GM12878 (cell line): ENCODE measurements at regions of chr14 and their contacts with region 1.

Region 1: DNA sequence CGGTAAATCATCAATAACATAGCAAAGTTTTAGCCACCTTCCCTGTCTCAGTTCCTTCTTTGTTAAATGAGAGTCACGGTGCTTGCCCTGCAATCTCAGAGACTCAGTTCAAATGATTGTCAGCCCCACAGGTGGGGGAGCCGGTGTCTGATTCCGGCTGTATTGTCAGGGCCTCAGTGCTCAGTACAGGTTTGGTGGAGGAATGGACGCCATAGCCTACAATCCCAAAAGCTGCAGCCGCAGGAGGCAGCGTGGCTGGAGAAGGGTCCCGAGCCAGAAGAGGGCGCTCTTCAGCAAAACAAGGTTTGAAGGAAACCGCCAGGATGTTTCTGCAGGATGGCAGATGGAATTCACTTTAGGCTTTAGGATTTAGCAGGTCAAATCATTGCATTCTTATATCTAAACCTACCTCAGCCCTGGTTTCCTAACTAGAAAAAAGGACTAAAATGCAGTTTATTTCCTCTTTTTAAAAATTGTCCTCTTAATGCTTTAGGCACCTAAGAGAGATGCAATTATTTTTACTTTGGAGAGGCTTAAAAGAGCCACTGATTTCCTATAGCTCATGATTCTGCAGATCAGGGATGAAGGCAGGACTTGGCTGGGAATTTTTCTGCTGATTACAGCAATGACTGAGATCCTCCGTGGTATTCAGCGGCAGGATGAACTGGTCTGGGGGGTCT is 29.2 kb downstream of the FOS start:
- DNase-seq: no peak
- ATAC-seq: peak; percentile 87
- H3K4me3 ChIP-seq: no peak overlapping the region
- H3K27ac ChIP-seq: no peak overlapping the region
- H3K4me1 ChIP-seq: peaks cover 8% of the 10 kb centered on the region
- H3K27me3 ChIP-seq: no peaks in the 10 kb centered on the region
- CTCF ChIP-seq: peak; percentile 87 to 97 (median 88); a peak in 5 of 6 replicates
- EP300 ChIP-seq: no peak
- POLR2A ChIP-seq: no peak
- RAD21 ChIP-seq: peak; percentile 90

Region 2: GRCh38 chr14:74945823-74946682 is 361.8 kb before region 1 on chr14:
- CTCF ChIA-PET with region 1: interaction called, 6 read pairs
- POLR2A ChIA-PET with region 1: no interaction called
- RAD21 ChIA-PET with region 1: no interaction called
- SMC1A ChIA-PET with region 1: interaction called, 4 read pairs
- in situ Hi-C with region 1: no loop called
- intact Hi-C with region 1: loop called (anchors 10 kb)
- DNase-seq: no peak
- ATAC-seq: peak; percentile 84
- H3K4me3 ChIP-seq: no peak overlapping the region
- H3K27ac ChIP-seq: no peak overlapping the region
- H3K4me1 ChIP-seq: peaks cover 23% of the 10 kb centered on the region
- H3K27me3 ChIP-seq: no peaks in the 10 kb centered on the region
- CTCF ChIP-seq: peak; percentile 90 to 96 (median 94)
- EP300 ChIP-seq: no peak
- POLR2A ChIP-seq: no peak
- RAD21 ChIP-seq: peak; percentile 87

Region 3: DNA sequence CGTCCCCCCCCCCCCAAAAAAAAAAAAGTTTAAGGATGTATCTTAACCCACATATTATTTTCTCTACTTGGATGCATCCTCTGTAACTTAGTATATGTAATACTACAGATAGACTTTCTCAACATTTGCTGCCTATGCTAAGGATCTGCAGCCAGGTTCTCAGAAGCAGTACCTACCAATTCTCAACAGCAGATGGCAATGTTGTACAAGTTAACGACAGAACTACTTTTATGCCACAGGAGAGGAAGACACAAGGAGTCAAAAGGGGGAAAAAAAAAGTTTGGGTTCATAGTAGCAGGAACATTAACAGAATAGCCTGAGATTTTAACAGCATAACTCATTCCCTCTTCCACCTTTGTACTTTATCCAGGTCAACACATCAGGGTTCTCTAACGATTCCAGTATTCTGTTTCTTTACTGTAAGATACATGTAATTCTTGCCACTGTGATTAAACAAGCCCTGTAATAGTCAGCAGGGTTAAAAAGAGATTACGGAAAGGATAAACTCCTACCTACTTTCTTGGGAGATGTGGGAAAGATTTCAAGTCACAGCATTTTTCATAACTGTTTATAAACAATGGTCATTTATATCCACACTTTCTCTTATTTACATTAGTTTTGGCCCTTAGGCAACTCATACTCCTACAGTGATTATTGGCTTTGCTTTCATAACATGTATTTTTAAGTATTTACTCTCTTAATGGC is 175.3 kb before region 1 on chr14:
- CTCF ChIA-PET with region 1: interaction called, 279 read pairs
- POLR2A ChIA-PET with region 1: interaction called, 3 read pairs
- RAD21 ChIA-PET with region 1: interaction called, 37 read pairs
- SMC1A ChIA-PET with region 1: interaction called, 154 read pairs
- in situ Hi-C with region 1: loop called (anchors 5 kb)
- intact Hi-C with region 1: loop called (anchors 1 kb)
- DNase-seq: peak; percentile 66
- ATAC-seq: peak; percentile 91
- H3K4me3 ChIP-seq: no peak overlapping the region
- H3K27ac ChIP-seq: no peak overlapping the region
- H3K4me1 ChIP-seq: peaks cover 11% of the 10 kb centered on the region
- H3K27me3 ChIP-seq: no peaks in the 10 kb centered on the region
- CTCF ChIP-seq: peak; percentile 67 to 70 (median 68)
- EP300 ChIP-seq: no peak
- POLR2A ChIP-seq: no peak
- RAD21 ChIP-seq: peak; percentile 94

Region 4: DNA sequence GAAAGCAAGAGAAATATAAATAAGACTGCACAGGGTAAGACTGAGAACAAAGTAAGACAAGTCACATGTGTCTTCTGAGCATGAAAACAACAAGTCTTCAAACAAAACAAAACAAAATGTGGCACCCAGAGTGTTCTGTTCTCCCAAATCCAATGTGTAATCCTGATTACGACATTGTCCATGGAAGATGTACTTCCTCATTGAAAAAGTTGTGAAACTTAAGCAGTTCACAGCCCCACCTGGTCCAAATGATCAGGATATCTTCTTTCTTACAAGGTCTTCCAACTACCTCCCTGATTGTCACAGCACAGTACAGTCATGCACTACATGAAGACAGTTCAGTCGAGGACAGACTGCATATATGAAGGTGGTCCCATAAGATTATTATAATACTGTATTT is 157.7 kb before region 1 on chr14:
- CTCF ChIA-PET with region 1: no interaction called
- POLR2A ChIA-PET with region 1: no interaction called
- RAD21 ChIA-PET with region 1: no interaction called
- SMC1A ChIA-PET with region 1: no interaction called
- in situ Hi-C with region 1: no loop called
- intact Hi-C with region 1: no loop called
- DNase-seq: no peak
- ATAC-seq: no peak
- H3K4me3 ChIP-seq: no peak overlapping the region
- H3K27ac ChIP-seq: no peak overlapping the region
- H3K4me1 ChIP-seq: no peaks in the 10 kb centered on the region
- H3K27me3 ChIP-seq: no peaks in the 10 kb centered on the region
- CTCF ChIP-seq: no peak
- EP300 ChIP-seq: no peak
- POLR2A ChIP-seq: no peak
- RAD21 ChIP-seq: no peak

Region 5: GRCh38 chr14:75198291-75198933 is 109.4 kb before region 1 on chr14:
- CTCF ChIA-PET with region 1: no interaction called
- POLR2A ChIA-PET with region 1: no interaction called
- RAD21 ChIA-PET with region 1: no interaction called
- SMC1A ChIA-PET with region 1: no interaction called
- in situ Hi-C with region 1: no loop called
- intact Hi-C with region 1: no loop called
- DNase-seq: no peak
- ATAC-seq: no peak
- H3K4me3 ChIP-seq: no peak overlapping the region
- H3K27ac ChIP-seq: no peak overlapping the region
- H3K4me1 ChIP-seq: no peaks in the 10 kb centered on the region
- H3K27me3 ChIP-seq: 0 out of 4 replicates have a peak, but pooled peaks cover 0 to 2% of the 10 kb centered on the region in 2 experiments
- CTCF ChIP-seq: no peak
- EP300 ChIP-seq: no peak
- POLR2A ChIP-seq: no peak
- RAD21 ChIP-seq: no peak

Region 6: DNA sequence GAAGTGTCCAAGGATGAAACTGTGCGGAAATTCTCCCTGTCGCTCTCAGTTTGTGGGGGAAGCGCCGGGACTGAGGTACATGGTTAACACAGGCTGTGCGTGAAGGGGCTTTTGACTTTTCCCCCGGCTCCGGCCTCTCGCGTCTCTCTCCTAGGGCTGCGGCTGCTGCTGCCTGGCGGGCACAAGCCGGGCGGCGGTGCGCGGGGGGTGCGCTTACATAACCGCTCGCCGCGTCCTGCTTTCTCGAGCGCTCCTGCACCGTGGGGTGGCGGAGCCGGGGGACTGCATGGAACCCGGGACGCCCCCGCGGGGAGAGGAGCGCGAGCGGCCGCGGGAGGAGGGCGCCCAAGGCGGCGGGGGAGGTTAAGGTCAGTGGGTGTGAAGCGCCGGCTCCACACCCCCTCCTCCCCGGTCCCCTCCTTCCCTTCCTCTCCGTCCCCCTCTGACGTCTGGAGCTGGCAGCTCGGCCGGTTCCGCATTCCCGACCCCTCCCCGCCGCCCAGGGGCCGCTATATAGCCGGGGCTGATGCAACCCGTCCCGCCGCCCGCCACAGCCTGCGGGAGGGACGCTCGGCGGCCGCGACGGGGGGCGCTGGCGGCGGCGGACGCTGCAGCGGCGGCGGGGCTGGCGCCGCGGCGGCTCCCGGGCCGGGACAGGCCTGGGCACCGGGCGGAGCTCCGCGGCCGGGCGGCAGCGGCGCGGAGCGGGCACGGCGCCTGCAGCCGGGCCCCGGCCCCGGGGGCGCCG is 119.8 kb after region 1 on chr14 and contains the start of gene JDP2:
- CTCF ChIA-PET with region 1: interaction called, 10 read pairs
- POLR2A ChIA-PET with region 1: interaction called, 3 read pairs
- RAD21 ChIA-PET with region 1: interaction called, 3 read pairs
- SMC1A ChIA-PET with region 1: interaction called, 5 read pairs
- in situ Hi-C with region 1: no loop called
- intact Hi-C with region 1: no loop called
- DNase-seq: no peak
- ATAC-seq: peak; percentile 69
- H3K4me3 ChIP-seq: peak within 1 kb of the TSS; percentile 86
- H3K27ac ChIP-seq: peak within 1 kb of the TSS; percentile 91
- H3K4me1 ChIP-seq: peaks cover 27% of the 10 kb centered on the region
- H3K27me3 ChIP-seq: no peaks in the 10 kb centered on the region
- CTCF ChIP-seq: 0 out of 6 replicates have a peak, but pooled peaks of 1 of the 3 experiments have one; percentile 3
- EP300 ChIP-seq: no peak
- POLR2A ChIP-seq: peak; percentile 66; the same call in 1 of the 2 replicates
- RAD21 ChIP-seq: no peak
- polyA plus RNA-seq, gene JDP2: 0.71 to 1.2 TPM

Region 7: DNA sequence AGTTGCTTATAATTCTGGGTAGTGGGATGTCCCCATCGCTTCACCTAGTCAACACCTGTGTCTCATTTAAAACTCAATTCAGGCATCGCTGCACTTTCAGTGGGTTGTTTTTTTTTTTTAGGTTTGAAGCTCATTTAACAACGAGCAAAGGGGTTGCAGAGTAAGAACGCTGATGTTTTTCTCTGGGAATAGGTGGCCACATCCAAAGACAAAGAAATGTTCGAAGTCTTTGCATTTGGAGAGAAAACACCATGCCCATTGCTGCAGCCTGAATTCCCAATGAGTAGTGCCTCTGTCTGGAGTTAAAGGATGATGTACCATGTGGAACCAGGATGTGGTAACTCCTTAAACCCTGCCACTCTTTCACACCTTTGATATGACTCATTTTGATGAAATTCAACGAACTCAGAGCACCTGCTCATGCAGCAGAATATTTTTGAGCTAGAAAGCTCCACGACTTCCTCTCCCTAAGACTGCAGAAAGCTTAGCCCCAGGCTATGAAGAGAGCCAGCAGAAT is 179.4 kb after region 1 on chr14:
- CTCF ChIA-PET with region 1: interaction called, 180 read pairs
- POLR2A ChIA-PET with region 1: interaction called, 21 read pairs
- RAD21 ChIA-PET with region 1: interaction called, 72 read pairs
- SMC1A ChIA-PET with region 1: interaction called, 180 read pairs
- in situ Hi-C with region 1: loop called (anchors 5 kb)
- intact Hi-C with region 1: loop called (anchors 1 kb)
- DNase-seq: peak; percentile 89
- ATAC-seq: peak; percentile 84
- H3K4me3 ChIP-seq: no peak overlapping the region
- H3K27ac ChIP-seq: peak overlapping the region; percentile 69
- H3K4me1 ChIP-seq: peaks cover 33% of the 10 kb centered on the region
- H3K27me3 ChIP-seq: no peaks in the 10 kb centered on the region
- CTCF ChIP-seq: no peak
- EP300 ChIP-seq: peak; percentile 75 to 86; a peak in 3 of 4 replicates
- POLR2A ChIP-seq: no peak
- RAD21 ChIP-seq: peak; percentile 9; the same call in 1 of the 2 replicates

Region 8: GRCh38 chr14:75560962-75561432 is 253.2 kb after region 1 on chr14:
- CTCF ChIA-PET with region 1: interaction called, 125 read pairs
- POLR2A ChIA-PET with region 1: no interaction called
- RAD21 ChIA-PET with region 1: interaction called, 18 read pairs
- SMC1A ChIA-PET with region 1: interaction called, 38 read pairs
- in situ Hi-C with region 1: loop called (anchors 5 kb)
- intact Hi-C with region 1: loop called (anchors 1 kb)
- DNase-seq: no peak
- ATAC-seq: peak; percentile 77
- H3K4me3 ChIP-seq: no peak overlapping the region
- H3K27ac ChIP-seq: no peak overlapping the region
- H3K4me1 ChIP-seq: peaks cover 27% of the 10 kb centered on the region
- H3K27me3 ChIP-seq: no peaks in the 10 kb centered on the region
- CTCF ChIP-seq: peak; percentile 84 to 91 (median 86)
- EP300 ChIP-seq: no peak
- POLR2A ChIP-seq: no peak
- RAD21 ChIP-seq: peak; percentile 82